Activated CD4-positive, alpha-beta T cell treated with anti-CD3 and anti-CD28 coated beads for 36 hours (primary cell): ENCODE measurements at regions of chr20 and their contacts with region 1.

Region 1: DNA sequence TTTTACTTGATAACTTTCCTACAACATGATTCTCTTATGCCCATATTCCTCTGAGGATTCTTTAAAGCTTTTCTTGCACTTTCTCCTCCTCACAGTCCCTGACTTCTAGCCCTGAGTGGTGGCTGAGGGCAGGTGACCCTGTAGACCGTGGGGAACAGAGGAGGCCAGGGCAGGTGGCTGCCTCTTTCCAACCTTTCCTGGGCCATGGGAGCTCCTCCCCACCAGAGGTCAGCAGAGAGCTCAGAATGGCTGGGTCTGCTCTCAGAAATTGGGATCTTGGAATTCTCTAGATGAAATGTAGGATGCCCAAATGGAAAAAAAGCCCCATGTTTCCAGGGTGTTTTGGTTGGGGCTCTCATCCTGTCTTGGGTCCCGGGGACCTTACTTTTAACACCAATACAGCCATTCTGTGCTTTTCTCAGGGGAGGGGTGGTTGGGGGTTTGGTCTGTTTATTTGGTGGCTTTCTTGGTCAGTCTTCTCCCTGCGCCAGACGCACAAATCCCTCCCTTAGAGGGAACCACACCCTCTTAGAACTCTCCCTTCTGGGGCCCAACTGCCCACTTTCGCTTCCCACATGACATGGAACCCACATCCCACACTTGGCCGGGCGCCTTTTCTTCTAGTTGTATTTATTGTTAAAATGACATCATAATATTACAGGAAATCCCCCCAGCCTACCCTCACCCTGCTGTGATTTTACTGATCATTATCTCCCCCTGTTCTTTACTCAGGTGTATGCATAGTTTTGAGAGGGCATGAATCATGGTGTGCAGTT is 17.9 kb downstream of the GNAS start:
- DNase-seq: peak; percentile 73
- ATAC-seq: peak; percentile 75
- H3K4me3 Mint-ChIP-seq: no peak overlapping the region
- H3K27ac Mint-ChIP-seq: peak overlapping the region; percentile 27
- H3K4me1 Mint-ChIP-seq: peaks cover 11% of the 10 kb centered on the region
- H3K27me3 Mint-ChIP-seq: no peaks in the 10 kb centered on the region

Region 2: DNA sequence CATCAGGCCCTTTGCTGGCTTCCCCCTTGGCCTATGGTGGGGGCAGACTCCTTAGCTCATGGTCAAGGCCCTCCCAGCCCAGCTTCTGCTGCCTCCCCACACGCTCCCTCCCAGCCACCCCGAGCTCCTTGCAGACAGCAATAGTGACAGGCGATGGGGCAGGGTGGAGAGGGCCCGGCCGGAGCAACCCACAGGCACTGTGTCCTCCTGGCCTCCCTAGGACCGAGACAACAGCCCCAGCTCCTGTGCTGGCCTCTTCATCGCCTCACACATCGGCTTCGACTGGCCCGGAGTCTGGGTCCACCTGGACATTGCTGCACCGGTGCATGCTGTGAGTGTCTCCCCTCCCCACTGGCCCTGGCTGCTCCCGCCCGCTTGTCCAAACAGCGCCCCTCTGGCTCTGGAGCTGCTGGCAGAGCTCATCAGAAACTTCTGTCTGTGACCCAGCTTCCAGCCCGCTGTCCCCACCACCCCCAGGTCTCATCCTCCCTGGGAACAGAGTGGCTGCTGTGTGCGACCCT is 156.0 kb before region 1 on chr20:
- CTCF ChIA-PET with region 1: no interaction called
- POLR2A ChIA-PET with region 1: no interaction called
- intact Hi-C with region 1: no loop called
- DNase-seq: peak; percentile 3
- ATAC-seq: no peak
- H3K4me3 Mint-ChIP-seq: no peak overlapping the region
- H3K27ac Mint-ChIP-seq: no peak overlapping the region
- H3K4me1 Mint-ChIP-seq: no peaks in the 10 kb centered on the region
- H3K27me3 Mint-ChIP-seq: no peaks in the 10 kb centered on the region

Region 3: DNA sequence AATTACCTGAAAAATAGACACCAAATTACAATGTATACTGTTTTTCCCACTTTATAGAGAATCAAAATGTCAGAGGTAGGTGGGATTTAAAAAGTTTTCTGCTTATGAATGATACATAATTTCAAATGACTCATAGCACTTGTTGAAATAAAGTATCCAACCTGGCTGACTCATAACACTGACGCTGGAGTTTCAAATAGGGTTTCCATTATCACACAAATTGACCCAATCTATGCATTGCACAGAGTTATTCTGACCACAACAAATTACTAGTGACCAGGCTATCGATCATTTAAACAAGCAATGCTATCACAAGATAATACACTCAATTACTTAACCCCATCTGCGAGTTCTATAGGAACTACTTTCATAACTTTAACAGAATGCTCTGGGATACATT is 204.0 kb after region 1 on chr20:
- CTCF ChIA-PET with region 1: interaction called, 3 read pairs
- POLR2A ChIA-PET with region 1: no interaction called
- intact Hi-C with region 1: loop called in 1 of 2 experiments (anchors 5 kb)
- DNase-seq: peak; percentile 31
- ATAC-seq: peak; percentile 79
- H3K4me3 Mint-ChIP-seq: no peak overlapping the region
- H3K27ac Mint-ChIP-seq: no peak overlapping the region
- H3K4me1 Mint-ChIP-seq: peaks cover 52% of the 10 kb centered on the region
- H3K27me3 Mint-ChIP-seq: peaks cover 18% of the 10 kb centered on the region

Region 4: GRCh38 chr20:59222253-59223181 is 352.1 kb after region 1 on chr20:
- CTCF ChIA-PET with region 1: interaction called, 3 read pairs
- POLR2A ChIA-PET with region 1: no interaction called
- intact Hi-C with region 1: loop called (anchors 1 kb)
- DNase-seq: peak; percentile 91
- ATAC-seq: peak; percentile 95
- H3K4me3 Mint-ChIP-seq: peak overlapping the region; percentile 65
- H3K27ac Mint-ChIP-seq: peak overlapping the region; percentile 81
- H3K4me1 Mint-ChIP-seq: peaks cover 31% of the 10 kb centered on the region
- H3K27me3 Mint-ChIP-seq: no peaks in the 10 kb centered on the region

Region 5: GRCh38 chr20:59495894-59496510 is 625.6 kb after region 1 on chr20:
- CTCF ChIA-PET with region 1: interaction called, 4 read pairs
- POLR2A ChIA-PET with region 1: no interaction called
- intact Hi-C with region 1: loop called (anchors 5 to 10 kb)
- DNase-seq: peak; percentile 83
- ATAC-seq: peak; percentile 75
- H3K4me3 Mint-ChIP-seq: no peak overlapping the region
- H3K27ac Mint-ChIP-seq: no peak overlapping the region
- H3K4me1 Mint-ChIP-seq: no peaks in the 10 kb centered on the region
- H3K27me3 Mint-ChIP-seq: peaks cover 7% of the 10 kb centered on the region